Endothelial cell of umbilical vein (primary cell): ENCODE measurements at regions of chr10 and their contacts with region 1.

Region 1: DNA sequence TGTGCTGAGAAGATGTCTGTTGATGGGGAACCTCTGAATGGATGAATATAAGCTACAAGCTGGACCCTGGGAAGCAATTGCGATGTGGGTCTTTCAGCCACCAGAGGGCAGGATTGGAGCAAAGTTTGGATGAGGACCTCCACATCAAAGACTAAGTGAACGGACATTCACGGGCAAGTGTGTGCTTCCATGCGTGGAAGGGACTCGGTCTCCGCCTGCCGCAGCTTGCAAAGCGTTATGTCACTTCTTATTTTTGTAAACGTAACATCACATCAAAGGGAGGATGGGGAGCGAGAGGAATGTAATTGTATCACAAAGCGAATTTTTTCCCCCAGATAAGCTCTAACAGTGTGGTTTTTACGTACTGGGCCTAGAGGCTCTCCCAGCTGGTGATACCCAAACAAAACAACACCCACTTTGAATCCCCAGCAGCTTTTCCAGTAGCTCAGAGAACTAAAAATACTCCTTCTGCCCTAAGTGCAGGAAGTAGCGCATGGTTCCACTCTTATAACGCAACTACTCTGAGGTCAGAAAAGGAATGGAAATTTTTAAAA is 65.0 kb downstream of the VWA2 start:
- DNase-seq: peak; percentile 91
- H3K4me3 ChIP-seq: peak overlapping the region in 1 of 3 experiments; percentile 12
- H3K27ac ChIP-seq: no peak overlapping the region
- H3K4me1 ChIP-seq: peaks cover 8% of the 10 kb centered on the region
- H3K27me3 ChIP-seq: peaks cover 2 to 10% of the 10 kb centered on the region in 2 experiments
- CTCF ChIP-seq: peak; percentile 77 to 87
- POLR2A ChIP-seq: no peak

Region 2: DNA sequence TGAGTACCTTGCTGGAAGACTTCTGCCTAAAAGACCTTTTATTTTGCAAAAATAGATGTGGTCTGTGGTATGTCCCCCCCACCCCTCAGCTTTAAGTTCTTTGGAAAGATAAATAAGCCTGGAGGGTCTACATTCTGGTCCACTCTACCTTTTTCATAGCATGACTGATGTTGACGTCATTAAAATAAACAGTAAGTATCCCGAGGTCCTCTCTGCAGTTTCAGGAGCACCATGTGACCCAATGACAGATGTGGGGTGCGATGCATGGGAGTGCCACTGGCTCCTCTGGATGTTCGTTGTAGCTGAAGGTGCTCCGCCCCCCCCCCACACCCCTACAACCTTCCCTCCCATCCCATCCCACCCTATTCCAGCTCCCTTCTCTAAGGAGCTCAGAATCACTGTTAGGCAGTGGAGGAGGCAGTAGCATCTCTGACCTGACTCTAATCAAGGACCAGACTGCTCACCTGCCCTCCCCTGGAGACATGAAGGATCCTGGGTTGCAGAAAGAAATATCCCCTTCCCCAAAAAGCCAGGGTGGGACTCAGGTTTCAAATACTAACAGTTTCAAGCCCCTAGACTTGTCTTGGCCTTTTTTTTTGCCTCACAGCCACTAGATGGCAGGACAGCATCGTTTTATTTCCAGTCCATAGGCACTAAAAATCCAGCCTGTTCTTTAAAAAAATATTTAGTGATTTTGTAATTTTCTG is 599.3 kb before region 1 on chr10:
- CTCF ChIA-PET with region 1: interaction called, 3 read pairs
- POLR2A ChIA-PET with region 1: no interaction called
- dilution Hi-C with region 1: no loop called
- intact Hi-C with region 1: loop called (anchors 2 kb)
- DNase-seq: peak; percentile 50
- H3K4me3 ChIP-seq: no peak overlapping the region
- H3K27ac ChIP-seq: no peak overlapping the region
- H3K4me1 ChIP-seq: peaks cover 20% of the 10 kb centered on the region
- H3K27me3 ChIP-seq: no peaks in the 10 kb centered on the region
- CTCF ChIP-seq: peak; percentile 52 to 59
- POLR2A ChIP-seq: no peak

Region 3: GRCh38 chr10:114083040-114083439 is 221.1 kb before region 1 on chr10:
- CTCF ChIA-PET with region 1: no interaction called
- POLR2A ChIA-PET with region 1: no interaction called
- dilution Hi-C with region 1: no loop called
- intact Hi-C with region 1: no loop called
- DNase-seq: no peak
- H3K4me3 ChIP-seq: no peak overlapping the region
- H3K27ac ChIP-seq: no peak overlapping the region
- H3K4me1 ChIP-seq: no peaks in the 10 kb centered on the region
- H3K27me3 ChIP-seq: no peaks in the 10 kb centered on the region
- CTCF ChIP-seq: no peak
- POLR2A ChIP-seq: no peak

Region 4: GRCh38 chr10:114181981-114182380 is 122.1 kb before region 1 on chr10:
- CTCF ChIA-PET with region 1: no interaction called
- POLR2A ChIA-PET with region 1: no interaction called
- dilution Hi-C with region 1: no loop called
- intact Hi-C with region 1: no loop called
- DNase-seq: peak; percentile 13
- H3K4me3 ChIP-seq: no peak overlapping the region
- H3K27ac ChIP-seq: no peak overlapping the region
- H3K4me1 ChIP-seq: no peaks in the 10 kb centered on the region
- H3K27me3 ChIP-seq: peaks cover 0 to 2% of the 10 kb centered on the region in 2 experiments
- CTCF ChIP-seq: no peak
- POLR2A ChIP-seq: no peak

Region 5: DNA sequence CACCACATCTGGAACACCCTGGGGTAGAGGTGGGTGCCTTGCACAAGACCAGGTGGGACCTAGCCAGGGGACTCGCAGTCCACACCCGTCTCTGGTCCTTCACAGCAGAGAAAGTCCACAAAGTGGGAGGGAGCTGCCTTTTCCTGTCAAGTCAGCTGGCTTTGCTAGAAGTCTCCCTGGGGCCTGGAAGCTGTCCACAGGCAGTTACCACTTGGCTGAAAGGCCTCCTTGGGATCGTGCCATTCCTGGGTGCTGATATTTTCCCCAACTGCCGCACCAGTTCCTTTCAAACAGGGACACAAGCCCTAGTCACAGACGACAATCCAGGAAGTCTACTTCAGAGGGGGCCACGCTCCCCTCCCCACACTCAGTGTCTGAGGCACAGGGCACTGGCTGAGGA is 24.8 kb after region 1 on chr10:
- CTCF ChIA-PET with region 1: interaction called, 17 read pairs
- POLR2A ChIA-PET with region 1: no interaction called
- dilution Hi-C with region 1: no loop called
- intact Hi-C with region 1: no loop called
- DNase-seq: no peak
- H3K4me3 ChIP-seq: no peak overlapping the region
- H3K27ac ChIP-seq: no peak overlapping the region
- H3K4me1 ChIP-seq: no peaks in the 10 kb centered on the region
- H3K27me3 ChIP-seq: peaks cover 3 to 15% of the 10 kb centered on the region in 2 experiments
- CTCF ChIP-seq: no peak
- POLR2A ChIP-seq: no peak

Region 6: DNA sequence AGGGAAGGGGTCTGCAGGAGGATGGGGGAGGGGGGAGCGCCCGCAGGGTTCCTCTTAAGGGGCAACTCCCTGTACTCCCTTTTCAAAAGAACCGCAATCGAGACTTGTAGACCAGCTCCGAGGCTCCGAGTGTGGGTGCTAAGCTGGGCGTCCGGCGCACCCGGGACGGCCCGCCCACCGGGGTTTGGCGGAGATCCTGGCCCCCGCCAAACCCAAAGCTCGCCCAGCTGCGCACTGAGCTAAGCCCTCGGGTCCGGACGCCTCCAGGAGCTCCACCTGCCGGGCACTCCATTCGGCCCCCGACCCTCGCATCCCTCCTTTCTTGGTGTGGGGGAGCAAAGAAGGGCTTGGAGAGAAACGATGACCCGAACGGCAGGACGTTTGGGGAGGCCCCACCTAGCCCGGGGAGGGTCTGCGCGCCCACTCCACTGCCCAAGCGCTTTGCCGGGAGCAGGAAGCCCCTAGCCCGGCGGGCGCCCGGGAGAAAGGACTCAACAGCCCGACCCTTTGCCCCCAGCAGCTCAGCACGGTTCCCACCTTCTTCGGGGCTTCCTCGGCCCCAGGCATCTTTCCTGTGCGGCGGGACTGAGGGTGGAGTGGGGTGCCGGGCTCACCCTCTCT is 99.6 kb after region 1 on chr10:
- CTCF ChIA-PET with region 1: interaction called, 16 read pairs
- POLR2A ChIA-PET with region 1: no interaction called
- dilution Hi-C with region 1: no loop called
- intact Hi-C with region 1: loop called (anchors 1 kb)
- DNase-seq: no peak
- H3K4me3 ChIP-seq: peak overlapping the region in 1 of 3 experiments; percentile 34
- H3K27ac ChIP-seq: no peak overlapping the region
- H3K4me1 ChIP-seq: peaks cover 5% of the 10 kb centered on the region
- H3K27me3 ChIP-seq: peaks cover 64 to 70% of the 10 kb centered on the region in 2 experiments
- CTCF ChIP-seq: peak in 1 of 2 donors; percentile 27
- POLR2A ChIP-seq: no peak

Region 7: GRCh38 chr10:114458955-114459354 is 154.9 kb after region 1 on chr10:
- CTCF ChIA-PET with region 1: interaction called, 124 read pairs
- POLR2A ChIA-PET with region 1: no interaction called
- dilution Hi-C with region 1: no loop called
- intact Hi-C with region 1: loop called (anchors 1 kb)
- DNase-seq: peak; percentile 39
- H3K4me3 ChIP-seq: no peak overlapping the region
- H3K27ac ChIP-seq: no peak overlapping the region
- H3K4me1 ChIP-seq: no peaks in the 10 kb centered on the region
- H3K27me3 ChIP-seq: no peaks in the 10 kb centered on the region
- CTCF ChIP-seq: peak; percentile 32 to 37
- POLR2A ChIP-seq: no peak

Region 8: DNA sequence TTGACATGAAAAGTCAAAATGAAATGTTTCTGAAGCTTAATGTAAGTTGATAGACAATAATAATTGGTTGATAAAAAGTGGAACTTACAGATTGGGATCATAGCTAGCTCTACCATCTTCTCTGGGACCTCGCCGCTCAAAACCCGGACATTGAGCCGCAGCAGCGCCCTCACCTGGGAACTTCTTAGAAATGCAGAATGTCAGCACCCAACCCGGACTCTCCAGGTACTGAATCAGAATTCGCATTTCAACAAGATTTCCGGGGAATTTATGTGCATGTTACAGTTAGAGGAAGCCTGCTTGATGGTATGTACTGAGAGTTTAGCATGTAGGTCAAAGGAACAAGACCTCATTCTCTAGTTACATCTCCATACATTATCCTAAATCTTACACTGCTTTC is 390.7 kb after region 1 on chr10:
- CTCF ChIA-PET with region 1: interaction called, 13 read pairs
- POLR2A ChIA-PET with region 1: no interaction called
- dilution Hi-C with region 1: no loop called
- intact Hi-C with region 1: no loop called
- DNase-seq: peak; percentile 62
- H3K4me3 ChIP-seq: no peak overlapping the region
- H3K27ac ChIP-seq: no peak overlapping the region
- H3K4me1 ChIP-seq: peaks cover 15% of the 10 kb centered on the region
- H3K27me3 ChIP-seq: no peaks in the 10 kb centered on the region
- CTCF ChIP-seq: peak; percentile 54 to 70
- POLR2A ChIP-seq: no peak

Region 9: GRCh38 chr10:115129752-115130151 is 825.7 kb after region 1 on chr10:
- CTCF ChIA-PET with region 1: interaction called, 35 read pairs
- POLR2A ChIA-PET with region 1: no interaction called
- dilution Hi-C with region 1: no loop called
- intact Hi-C with region 1: loop called (anchors 1 kb)
- DNase-seq: peak; percentile 46
- H3K4me3 ChIP-seq: no peak overlapping the region
- H3K27ac ChIP-seq: no peak overlapping the region
- H3K4me1 ChIP-seq: no peaks in the 10 kb centered on the region
- H3K27me3 ChIP-seq: no peaks in the 10 kb centered on the region
- CTCF ChIP-seq: no peak
- POLR2A ChIP-seq: no peak